PC-3 (cell line): ENCODE measurements at regions of chr5 and their contacts with region 1.

Region 1: GRCh38 chr5:57298295-57298984 is 124.6 kb downstream of the GPBP1 start:
- DNase-seq: peak; percentile 86
- ATAC-seq: peak; percentile 79
- H3K4me3 ChIP-seq: 0 out of 2 replicates have a peak overlapping the region, but pooled peaks have one; percentile 29
- H3K27ac ChIP-seq: peak overlapping the region; percentile 28; the same call in 1 of the 2 replicates
- H3K4me1 ChIP-seq: peaks cover 20% of the 10 kb centered on the region
- H3K27me3 ChIP-seq: no peaks in the 10 kb centered on the region
- CTCF ChIP-seq: peak; percentile 73

Region 2: DNA sequence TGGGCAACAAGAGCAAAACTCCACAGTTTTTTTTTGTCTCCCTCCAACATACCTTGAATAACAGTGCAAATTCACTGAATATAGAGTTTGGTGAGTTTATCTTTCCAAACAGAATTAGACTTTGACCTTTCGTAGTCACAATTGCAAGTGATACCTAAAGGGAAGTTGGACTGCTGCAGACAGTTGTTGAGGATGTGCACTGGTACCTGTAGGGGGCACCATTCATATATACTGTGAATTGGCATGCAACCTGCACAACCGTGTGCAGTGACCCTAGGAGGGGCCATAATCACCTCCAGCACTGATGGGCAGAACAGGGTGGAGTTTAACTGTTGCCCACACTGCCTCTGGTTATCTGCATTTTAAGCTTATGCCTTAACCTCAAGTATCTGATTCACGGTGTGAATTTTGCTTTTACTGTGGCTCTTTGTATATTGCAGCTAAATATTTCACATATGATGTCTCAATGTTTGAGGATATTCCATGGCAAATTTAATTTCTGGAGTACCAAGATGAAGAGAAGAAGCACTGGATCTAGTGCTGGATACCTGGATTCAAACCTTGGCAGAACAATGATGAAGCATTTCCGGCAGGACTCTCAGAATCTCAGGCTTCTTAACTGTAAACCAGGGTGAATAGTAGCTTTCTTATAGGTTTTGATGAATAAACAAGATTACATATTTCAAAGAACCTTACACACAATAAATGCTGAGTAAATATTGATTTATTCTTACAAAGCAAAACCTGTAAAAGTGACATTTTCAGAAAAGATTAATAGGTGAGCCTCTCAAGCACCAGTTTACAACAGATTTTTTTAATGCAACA is 39.8 kb after region 1 on chr5:
- CTCF ChIA-PET with region 1: no interaction called
- POLR2A ChIA-PET with region 1: no interaction called
- intact Hi-C with region 1: loop called (anchors 1 kb)
- DNase-seq: peak; percentile 62
- ATAC-seq: peak; percentile 67
- H3K4me3 ChIP-seq: no peak overlapping the region
- H3K27ac ChIP-seq: peak overlapping the region; percentile 67
- H3K4me1 ChIP-seq: peaks cover 49% of the 10 kb centered on the region
- H3K27me3 ChIP-seq: no peaks in the 10 kb centered on the region
- CTCF ChIP-seq: peak; percentile 59

Region 3: GRCh38 chr5:57411982-57412381 is 113.5 kb after region 1 on chr5:
- CTCF ChIA-PET with region 1: no interaction called
- POLR2A ChIA-PET with region 1: no interaction called
- intact Hi-C with region 1: loop called (anchors 5 kb)
- DNase-seq: peak; percentile 58
- ATAC-seq: peak; percentile 81
- H3K4me3 ChIP-seq: no peak overlapping the region
- H3K27ac ChIP-seq: peak overlapping the region; percentile 14
- H3K4me1 ChIP-seq: peaks cover 22% of the 10 kb centered on the region
- H3K27me3 ChIP-seq: no peaks in the 10 kb centered on the region
- CTCF ChIP-seq: no peak

Region 4: GRCh38 chr5:57650360-57651069 is 352.1 kb after region 1 on chr5:
- CTCF ChIA-PET with region 1: no interaction called
- POLR2A ChIA-PET with region 1: no interaction called
- intact Hi-C with region 1: loop called (anchors 2 kb)
- DNase-seq: peak; percentile 64
- ATAC-seq: peak; percentile 86
- H3K4me3 ChIP-seq: no peak overlapping the region
- H3K27ac ChIP-seq: no peak overlapping the region
- H3K4me1 ChIP-seq: no peaks in the 10 kb centered on the region
- H3K27me3 ChIP-seq: no peaks in the 10 kb centered on the region
- CTCF ChIP-seq: peak; percentile 71

Region 5: GRCh38 chr5:57841676-57842363 is 543.4 kb after region 1 on chr5:
- CTCF ChIA-PET with region 1: no interaction called
- POLR2A ChIA-PET with region 1: no interaction called
- intact Hi-C with region 1: loop called (anchors 2 kb)
- DNase-seq: peak; percentile 87
- ATAC-seq: peak; percentile 64
- H3K4me3 ChIP-seq: peak overlapping the region; percentile 12; the same call in 1 of the 2 replicates
- H3K27ac ChIP-seq: peak overlapping the region; percentile 81
- H3K4me1 ChIP-seq: peaks cover 57% of the 10 kb centered on the region
- H3K27me3 ChIP-seq: no peaks in the 10 kb centered on the region
- CTCF ChIP-seq: no peak